ENCODE measurements at regions of chr1 and their contacts with region 1.

Region 1: DNA sequence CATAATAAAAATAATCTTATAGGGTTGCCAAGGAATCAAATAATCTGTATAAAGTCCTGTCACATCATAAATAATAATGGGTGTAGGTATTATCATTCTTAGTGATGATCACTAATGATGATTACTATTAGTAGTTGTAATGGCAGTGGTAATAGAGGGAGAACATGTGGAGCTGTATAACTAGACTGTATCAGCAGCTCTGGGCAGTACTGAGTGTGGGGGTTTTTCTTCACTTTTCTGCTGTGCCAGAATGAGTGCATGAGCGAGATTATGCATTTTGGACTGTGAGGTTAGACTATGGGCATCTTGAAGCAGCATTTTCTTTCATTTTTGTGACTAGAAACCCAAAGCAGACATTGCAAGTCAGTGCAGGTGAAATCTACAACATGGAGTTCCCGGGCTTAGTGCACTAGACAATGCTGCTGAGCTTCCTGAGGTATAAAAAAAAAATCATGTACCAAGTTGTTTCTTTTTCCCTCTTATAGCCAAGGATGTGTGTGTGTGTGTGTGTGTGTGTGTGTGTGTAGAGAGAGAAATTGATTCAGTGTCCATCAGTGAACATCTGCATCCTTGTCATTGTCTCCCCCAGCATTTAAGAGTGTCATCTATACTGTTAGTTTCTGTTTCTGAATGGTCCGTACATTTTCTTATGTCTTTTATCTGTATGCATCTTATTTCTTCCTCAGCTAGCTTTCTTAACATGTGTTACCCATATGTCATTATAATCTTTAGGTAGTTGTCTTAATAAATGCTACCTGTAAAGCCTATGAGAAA is 86.6 kb downstream of the GIPC2 start:
- DNase-seq: no peak
- ATAC-seq: no peak
- H3K4me3 ChIP-seq: no peak overlapping the region
- H3K27ac ChIP-seq: no peak overlapping the region
- H3K4me1 ChIP-seq: no peaks in the 10 kb centered on the region
- H3K27me3 ChIP-seq: no peaks in the 10 kb centered on the region
- CTCF ChIP-seq: no peak
- POLR2A ChIP-seq: no peak

Region 2: GRCh38 chr1:78101514-78101913 is 30.8 kb before region 1 on chr1:
- in situ Hi-C with region 1: no loop called
- intact Hi-C with region 1: no loop called
- DNase-seq: no peak
- ATAC-seq: peak; percentile 68 to 81
- H3K4me3 ChIP-seq: no peak overlapping the region
- H3K27ac ChIP-seq: peak overlapping the region; percentile 5 to 64 (median 35)
- H3K4me1 ChIP-seq: peaks cover 19 to 22% of the 10 kb centered on the region in 2 donors
- H3K27me3 ChIP-seq: no peaks in the 10 kb centered on the region
- CTCF ChIP-seq: no peak
- POLR2A ChIP-seq: no peak

Region 3: DNA sequence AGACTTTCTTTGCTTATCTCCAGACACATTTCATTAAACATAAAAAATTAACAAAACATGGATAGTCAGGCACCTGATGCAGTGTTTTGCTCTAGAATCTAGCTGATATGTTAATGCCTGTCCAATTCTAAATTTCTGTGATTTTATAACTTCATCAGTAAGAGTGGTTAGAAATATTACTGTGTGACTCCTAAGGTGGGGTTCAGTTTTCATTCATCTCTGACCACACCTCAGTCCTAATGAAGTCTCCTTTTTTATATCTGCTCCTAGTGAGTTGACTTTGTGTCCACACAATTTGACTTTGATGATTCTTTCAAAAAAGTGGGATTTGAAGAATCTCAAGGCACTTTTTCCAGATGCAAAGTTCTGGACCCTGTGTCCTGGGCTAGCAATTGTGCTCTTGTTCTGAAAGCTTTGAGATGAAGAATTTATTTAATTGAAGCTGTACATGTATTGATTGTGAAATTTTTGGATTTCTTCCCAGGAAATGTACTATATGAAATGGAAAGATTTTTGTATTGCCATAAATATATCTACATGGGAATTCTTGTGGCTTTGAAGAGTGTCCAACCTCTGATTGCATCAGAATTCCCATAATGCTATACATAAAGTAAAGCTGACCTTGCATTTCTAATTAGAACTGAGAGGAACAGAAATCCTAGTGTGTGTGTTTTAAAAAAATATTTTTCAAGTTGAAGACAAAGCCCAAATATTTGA is 24.6 kb after region 1 on chr1:
- in situ Hi-C with region 1: no loop called
- intact Hi-C with region 1: no loop called
- DNase-seq: no peak
- ATAC-seq: no peak
- H3K4me3 ChIP-seq: no peak overlapping the region
- H3K27ac ChIP-seq: no peak overlapping the region
- H3K4me1 ChIP-seq: peaks cover 0 to 5% of the 10 kb centered on the region in 2 donors
- H3K27me3 ChIP-seq: no peaks in the 10 kb centered on the region
- CTCF ChIP-seq: no peak
- POLR2A ChIP-seq: no peak

Region 4: DNA sequence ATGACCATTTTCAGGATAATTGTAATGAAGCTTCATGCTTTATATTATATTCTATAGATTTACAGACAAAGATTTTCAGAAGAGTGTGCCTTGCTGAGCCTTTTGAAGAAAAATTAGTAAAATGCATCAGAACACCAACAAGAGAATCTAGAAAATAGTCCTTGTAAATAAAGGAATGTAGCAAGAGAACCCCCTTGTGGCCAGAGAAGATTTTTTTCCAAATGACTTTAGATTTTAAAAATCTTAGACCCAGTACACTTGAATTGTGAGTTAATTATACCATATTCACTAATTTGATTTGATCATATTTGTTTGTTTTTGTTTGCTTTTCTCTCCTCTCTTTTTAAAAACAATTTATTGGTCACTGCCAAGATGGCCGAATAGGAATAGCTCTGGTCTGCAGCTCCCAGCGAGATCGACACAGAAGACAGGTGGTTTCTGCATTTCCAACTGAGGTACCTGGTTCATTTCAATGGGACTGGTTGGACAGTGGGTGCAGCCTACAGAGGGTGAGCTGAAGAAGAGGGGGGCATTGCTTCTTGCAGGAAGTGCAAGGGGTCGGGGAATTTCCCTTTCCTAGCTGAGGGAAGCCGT is 475.1 kb after region 1 on chr1:
- in situ Hi-C with region 1: loop called in 3 of 4 experiments (anchors 5 to 10 kb)
- intact Hi-C with region 1: no loop called
- DNase-seq: no peak
- ATAC-seq: no peak
- H3K4me3 ChIP-seq: no peak overlapping the region
- H3K27ac ChIP-seq: no peak overlapping the region
- H3K4me1 ChIP-seq: no peaks in the 10 kb centered on the region
- H3K27me3 ChIP-seq: no peaks in the 10 kb centered on the region
- CTCF ChIP-seq: peak in 4 of 5 experiments; percentile 19 to 48 (median 31)
- POLR2A ChIP-seq: no peak

Region 5: DNA sequence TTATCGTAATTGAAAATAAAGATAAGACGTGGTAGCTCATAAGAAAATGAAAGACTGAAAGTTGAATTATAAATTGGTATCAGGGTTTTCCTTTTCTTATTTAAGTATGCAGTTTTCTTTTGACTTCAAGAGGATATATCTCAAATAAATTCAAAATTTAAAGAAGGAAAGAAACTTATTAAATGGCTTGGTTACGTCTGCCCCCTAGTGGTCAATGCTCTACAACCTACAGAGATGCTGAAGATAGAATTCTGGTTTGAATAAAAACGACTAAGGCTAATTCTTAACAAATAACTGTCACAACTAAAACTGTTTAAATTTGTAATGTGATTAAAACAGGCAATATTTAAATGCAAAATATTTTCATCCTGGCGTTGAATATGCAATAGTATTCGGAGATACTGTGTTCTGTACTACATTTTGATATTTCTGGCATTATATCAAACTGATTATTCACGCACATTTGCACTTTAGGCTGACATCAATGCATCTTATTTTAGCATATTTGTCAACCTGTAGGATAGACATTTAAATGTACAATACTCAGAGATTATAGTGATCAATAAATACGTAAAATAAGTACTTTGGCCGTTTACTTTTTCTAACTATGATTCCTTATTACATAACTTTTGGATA is 544.1 kb after region 1 on chr1:
- in situ Hi-C with region 1: loop called in 2 of 4 experiments (anchors 10 to 25 kb)
- intact Hi-C with region 1: loop called (anchors 5 kb)
- DNase-seq: peak in 1 of 2 donors; percentile 15
- ATAC-seq: no peak
- H3K4me3 ChIP-seq: no peak overlapping the region
- H3K27ac ChIP-seq: no peak overlapping the region
- H3K4me1 ChIP-seq: no peaks in the 10 kb centered on the region
- H3K27me3 ChIP-seq: no peaks in the 10 kb centered on the region
- CTCF ChIP-seq: peak; percentile 63 to 87 (median 82)
- POLR2A ChIP-seq: no peak

Region 6: DNA sequence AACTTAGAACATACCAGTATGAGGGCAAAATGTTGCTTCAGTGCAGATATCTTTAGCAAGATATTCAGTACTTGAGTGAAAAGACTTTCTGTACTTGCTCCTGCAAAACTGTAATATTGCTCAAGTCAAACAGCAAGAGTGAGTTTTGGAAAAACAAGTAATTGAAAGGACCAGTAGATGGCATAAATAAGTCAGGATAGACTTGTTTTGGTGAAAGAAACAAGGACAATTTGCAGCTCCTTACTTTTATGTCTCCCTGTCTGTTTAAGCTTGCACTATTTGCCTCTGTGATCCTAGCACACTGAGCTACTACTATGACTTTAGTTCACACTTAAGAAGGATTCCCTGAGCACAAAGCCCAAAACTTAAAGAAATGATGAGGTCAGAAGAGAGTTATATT is 556.3 kb after region 1 on chr1:
- in situ Hi-C with region 1: loop called in 1 of 4 experiments (anchors 10 kb)
- intact Hi-C with region 1: no loop called
- DNase-seq: no peak
- ATAC-seq: no peak
- H3K4me3 ChIP-seq: no peak overlapping the region
- H3K27ac ChIP-seq: no peak overlapping the region
- H3K4me1 ChIP-seq: no peaks in the 10 kb centered on the region
- H3K27me3 ChIP-seq: no peaks in the 10 kb centered on the region
- CTCF ChIP-seq: no peak
- POLR2A ChIP-seq: no peak

Measured in gastrocnemius medialis (tissue), 4 donors.